ENCODE measurements at regions of chrX and their contacts with region 1.

Region 1: GRCh38 chrX:104310090-104310489 is 55.4 kb upstream of the ESX1 start:
- DNase-seq: peak; percentile 37
- H3K4me3 ChIP-seq: peak overlapping the region in 2 of 3 experiments; percentile 12 to 16
- H3K27ac ChIP-seq: no peak overlapping the region
- H3K4me1 ChIP-seq: peaks cover 25% of the 10 kb centered on the region
- H3K27me3 ChIP-seq: no peaks in the 10 kb centered on the region
- CTCF ChIP-seq: peak; percentile 44 to 58

Region 2: DNA sequence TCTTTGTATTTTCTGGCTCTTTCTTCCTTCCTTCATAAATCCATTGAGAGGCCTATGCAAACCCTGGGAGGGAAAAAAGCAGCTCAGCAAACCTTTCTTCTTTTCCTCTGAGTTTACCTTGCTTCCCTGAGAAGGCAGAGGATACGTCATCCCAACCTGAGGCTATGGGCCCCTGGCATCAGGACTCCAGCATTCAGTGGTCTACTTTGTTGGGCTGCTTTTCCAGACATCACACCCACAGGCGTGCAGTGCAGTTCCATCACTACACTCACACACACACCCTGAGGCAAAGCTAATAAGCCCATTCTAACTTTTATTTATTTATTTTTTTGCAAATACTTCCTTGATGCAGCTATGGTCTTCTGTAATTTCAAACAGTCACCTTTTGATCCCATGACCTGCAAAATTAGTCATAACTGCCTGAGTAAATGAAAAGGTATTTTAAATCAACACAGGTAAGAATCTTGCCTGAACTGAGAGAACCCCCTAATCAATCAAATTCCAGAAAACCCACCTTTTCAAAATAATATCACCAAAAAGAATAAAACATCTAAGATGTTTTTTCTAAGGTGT is 58.7 kb before region 1 on chrX:
- CTCF ChIA-PET with region 1: no interaction called
- dilution Hi-C with region 1: no loop called
- in situ Hi-C with region 1: no loop called
- intact Hi-C with region 1: no loop called
- DNase-seq: peak; percentile 12
- H3K4me3 ChIP-seq: no peak overlapping the region
- H3K27ac ChIP-seq: no peak overlapping the region
- H3K4me1 ChIP-seq: peaks cover 5% of the 10 kb centered on the region
- H3K27me3 ChIP-seq: peaks cover 26% of the 10 kb centered on the region
- CTCF ChIP-seq: no peak

Region 3: GRCh38 chrX:104343428-104344129 is 33.5 kb after region 1 on chrX:
- CTCF ChIA-PET with region 1: no interaction called
- dilution Hi-C with region 1: no loop called
- in situ Hi-C with region 1: no loop called
- intact Hi-C with region 1: loop called (anchors 1 kb)
- DNase-seq: peak; percentile 58
- H3K4me3 ChIP-seq: no peak overlapping the region
- H3K27ac ChIP-seq: peak overlapping the region; percentile 23
- H3K4me1 ChIP-seq: peaks cover 2% of the 10 kb centered on the region
- H3K27me3 ChIP-seq: no peaks in the 10 kb centered on the region
- CTCF ChIP-seq: peak; percentile 63 to 72

Region 4: DNA sequence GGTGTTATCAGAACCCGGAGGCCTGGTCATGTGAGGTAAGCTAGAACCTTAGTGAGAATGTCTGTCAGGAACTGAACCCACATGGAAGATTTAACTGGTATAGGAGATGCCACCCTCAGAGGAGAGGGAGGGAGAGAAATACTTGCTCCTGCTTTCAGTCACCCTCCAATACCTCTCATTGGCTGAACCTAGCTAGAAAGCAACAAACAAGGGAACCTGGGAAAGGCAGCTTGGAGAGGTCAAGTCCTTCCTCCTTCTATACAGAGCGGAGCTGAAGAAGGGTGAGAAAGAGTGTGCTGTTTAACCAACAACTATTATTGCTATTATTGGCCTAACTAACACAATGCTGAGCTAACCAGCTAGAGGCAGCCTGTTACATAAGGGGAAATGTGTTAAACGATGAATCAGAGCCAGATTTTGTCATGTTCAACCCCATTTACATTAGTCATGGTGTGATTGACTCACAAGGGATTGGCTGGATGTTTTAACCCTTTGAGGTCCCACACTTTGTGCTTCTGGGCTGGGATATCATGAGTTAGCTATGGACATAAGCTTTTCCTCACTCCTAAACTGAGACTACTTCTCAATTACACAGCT is 41.2 kb after region 1 on chrX:
- CTCF ChIA-PET with region 1: no interaction called
- dilution Hi-C with region 1: loop called (anchors 5 kb)
- in situ Hi-C with region 1: no loop called
- intact Hi-C with region 1: no loop called
- DNase-seq: peak; percentile 91
- H3K4me3 ChIP-seq: no peak overlapping the region
- H3K27ac ChIP-seq: peak overlapping the region; percentile 59
- H3K4me1 ChIP-seq: peaks cover 26% of the 10 kb centered on the region
- H3K27me3 ChIP-seq: no peaks in the 10 kb centered on the region
- CTCF ChIP-seq: no peak

Region 5: GRCh38 chrX:104565791-104566680 is 255.9 kb after region 1 on chrX and contains the start of gene IL1RAPL2:
- CTCF ChIA-PET with region 1: no interaction called
- dilution Hi-C with region 1: no loop called
- in situ Hi-C with region 1: loop called in 1 of 2 experiments (anchors 25 kb)
- intact Hi-C with region 1: loop called (anchors 1 kb)
- DNase-seq: peak; percentile 58
- H3K4me3 ChIP-seq: peak within 1 kb of the TSS; percentile 46 to 55 (median 53)
- H3K27ac ChIP-seq: no peak within 1 kb of the TSS
- H3K4me1 ChIP-seq: peaks cover 3% of the 10 kb centered on the region
- H3K27me3 ChIP-seq: peaks cover 4% of the 10 kb centered on the region
- CTCF ChIP-seq: peak; percentile 64 to 84
- total RNA-seq, gene IL1RAPL2: 0.19 to 0.50 TPM

Region 6: GRCh38 chrX:104712515-104712914 is 402.4 kb after region 1 on chrX:
- CTCF ChIA-PET with region 1: no interaction called
- dilution Hi-C with region 1: no loop called
- in situ Hi-C with region 1: no loop called
- intact Hi-C with region 1: loop called (anchors 5 kb)
- DNase-seq: no peak
- H3K4me3 ChIP-seq: no peak overlapping the region
- H3K27ac ChIP-seq: no peak overlapping the region
- H3K4me1 ChIP-seq: no peaks in the 10 kb centered on the region
- H3K27me3 ChIP-seq: peaks cover 4% of the 10 kb centered on the region
- CTCF ChIP-seq: peak; percentile 19 to 45

Region 7: DNA sequence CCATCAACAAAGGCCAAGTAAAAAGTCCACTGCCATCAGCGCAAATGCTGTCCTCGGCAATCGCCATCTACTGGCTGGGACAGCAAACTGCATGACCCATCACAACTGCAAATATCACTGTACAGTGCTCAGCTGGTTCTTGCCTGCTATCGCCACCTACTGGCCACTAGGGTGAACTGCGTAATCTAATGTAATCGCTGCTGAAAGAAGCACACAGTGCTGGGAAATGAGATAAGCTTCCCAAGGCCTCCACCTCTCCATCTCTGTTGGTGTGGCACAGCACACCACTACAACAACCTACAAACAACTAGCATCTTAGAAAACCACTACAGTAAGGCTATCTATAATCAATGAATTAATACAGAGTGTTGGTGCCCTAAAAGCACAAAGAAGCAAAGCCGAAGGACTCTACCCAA is 612.1 kb after region 1 on chrX:
- CTCF ChIA-PET with region 1: no interaction called
- dilution Hi-C with region 1: no loop called
- in situ Hi-C with region 1: no loop called
- intact Hi-C with region 1: loop called (anchors 1 kb)
- DNase-seq: peak; percentile 58
- H3K4me3 ChIP-seq: no peak overlapping the region
- H3K27ac ChIP-seq: no peak overlapping the region
- H3K4me1 ChIP-seq: no peaks in the 10 kb centered on the region
- H3K27me3 ChIP-seq: peaks cover 5% of the 10 kb centered on the region
- CTCF ChIP-seq: peak; percentile 97 to 100